Calu3 (cell line): ENCODE measurements at regions of chr1 and their contacts with region 1.

Region 1: GRCh38 chr1:228691926-228692325 is 43.4 kb upstream of the RHOU start:
- DNase-seq: peak; percentile 58
- H3K4me3 Mint-ChIP-seq: no peak overlapping the region
- H3K27ac Mint-ChIP-seq: no peak overlapping the region
- H3K4me1 Mint-ChIP-seq: peaks cover 11% of the 10 kb centered on the region
- H3K27me3 Mint-ChIP-seq: peaks cover 15% of the 10 kb centered on the region
- CTCF ChIP-seq: peak; percentile 58

Region 2: GRCh38 chr1:228664399-228664914 is 27.5 kb before region 1 on chr1:
- CTCF ChIA-PET with region 1: interaction called, 11 read pairs
- intact Hi-C with region 1: no loop called
- DNase-seq: peak; percentile 88
- H3K4me3 Mint-ChIP-seq: peak overlapping the region; percentile 23
- H3K27ac Mint-ChIP-seq: no peak overlapping the region
- H3K4me1 Mint-ChIP-seq: peaks cover 40% of the 10 kb centered on the region
- H3K27me3 Mint-ChIP-seq: no peaks in the 10 kb centered on the region
- CTCF ChIP-seq: peak; percentile 79

Region 3: GRCh38 chr1:229156872-229157271 is 464.9 kb after region 1 on chr1:
- CTCF ChIA-PET with region 1: interaction called, 5 read pairs
- intact Hi-C with region 1: loop called (anchors 2 kb)
- DNase-seq: peak; percentile 38
- H3K4me3 Mint-ChIP-seq: no peak overlapping the region
- H3K27ac Mint-ChIP-seq: no peak overlapping the region
- H3K4me1 Mint-ChIP-seq: peaks cover 8% of the 10 kb centered on the region
- H3K27me3 Mint-ChIP-seq: no peaks in the 10 kb centered on the region
- CTCF ChIP-seq: peak; percentile 37